AG04449 (cell line): ENCODE measurements at regions of chr10 and their contacts with region 1.

Region 1: DNA sequence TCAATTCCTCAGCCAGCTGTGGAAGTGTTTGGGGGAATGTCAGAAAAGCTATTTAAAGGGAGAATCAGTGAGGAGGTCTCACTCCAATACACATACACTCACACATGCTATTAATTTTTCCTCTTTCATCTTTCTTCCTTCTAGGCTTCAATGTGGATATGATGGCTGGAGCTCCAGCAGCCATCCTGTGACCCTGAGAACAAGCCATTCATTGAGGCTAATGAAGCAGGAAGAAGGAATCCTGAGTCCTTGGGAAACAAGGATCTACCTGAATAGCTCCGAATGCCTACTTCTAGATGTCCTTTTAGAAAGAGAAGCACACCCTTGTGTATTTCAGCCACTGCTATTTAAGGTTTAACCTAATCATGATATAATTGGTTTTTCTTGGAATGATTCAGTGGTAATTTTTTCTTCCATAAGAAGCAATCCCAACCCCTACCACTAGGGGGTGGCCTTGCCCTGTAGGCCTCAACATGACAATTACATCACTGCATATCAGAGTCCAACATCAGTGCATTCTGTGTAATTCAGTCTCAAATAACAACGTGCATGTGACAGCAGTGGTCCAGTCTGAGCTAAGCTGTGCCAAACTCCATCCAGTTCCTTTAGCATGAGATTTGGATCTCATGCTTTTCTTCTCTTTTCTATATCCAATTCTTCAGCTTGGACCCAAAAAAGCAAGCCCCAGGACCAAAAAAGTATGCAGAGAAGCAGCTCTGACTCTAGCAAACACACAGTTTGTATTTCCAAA is 85.3 kb upstream of the ANKRD1 start:
- DNase-seq: peak; percentile 41
- H3K4me3 ChIP-seq: no peak overlapping the region
- CTCF ChIP-seq: peak; percentile 77

Region 2: DNA sequence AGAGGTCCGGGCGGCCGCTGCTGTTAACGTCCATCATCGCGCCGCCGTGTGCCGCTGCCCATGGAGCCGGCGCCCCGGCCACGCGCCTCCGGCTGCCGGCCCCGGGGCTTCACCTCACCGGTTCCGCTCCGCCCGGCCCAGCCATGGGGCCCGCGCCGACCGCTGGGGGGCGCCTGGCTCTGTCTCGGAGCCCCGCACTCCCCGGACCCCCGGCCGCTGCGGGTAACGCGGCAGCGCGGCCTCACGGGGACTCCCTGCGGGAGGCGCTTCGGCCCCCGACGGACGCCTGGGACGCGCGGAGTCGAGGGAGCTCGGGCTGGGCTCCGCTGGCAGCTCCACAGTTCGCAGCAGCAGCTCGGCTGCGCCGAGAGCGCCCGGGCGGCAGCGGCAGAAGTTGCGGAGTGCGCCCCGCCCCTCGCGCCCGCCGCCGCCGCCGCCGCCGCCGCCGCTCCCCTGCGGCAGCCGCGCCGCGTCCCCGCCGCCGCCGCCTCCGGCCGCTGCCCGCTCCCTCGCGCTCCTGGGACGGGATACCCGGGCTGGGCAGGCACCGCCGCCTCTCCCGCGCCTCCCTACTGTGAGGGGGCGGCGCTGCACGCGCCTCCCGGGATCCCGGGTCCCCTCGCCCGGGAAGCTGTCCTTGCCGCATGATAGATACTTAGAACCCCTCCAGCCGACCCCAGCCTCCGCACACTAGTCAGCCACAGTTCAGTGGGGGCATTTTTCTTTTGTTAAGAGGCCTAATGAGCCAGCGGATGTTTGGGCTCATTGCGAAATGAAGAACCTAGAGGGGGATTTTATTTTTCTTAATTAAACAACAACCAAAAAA is 148.3 kb before region 1 on chr10 and contains the start of gene HTR7:
- CTCF ChIA-PET with region 1: no interaction called
- POLR2A ChIA-PET with region 1: no interaction called
- DNase-seq: no peak
- H3K4me3 ChIP-seq: peak within 1 kb of the TSS; percentile 63
- CTCF ChIP-seq: peak; percentile 57

Region 3: GRCh38 chr10:90920986-90921666 is 85.0 kb before region 1 on chr10 and contains the start of gene ANKRD1:
- CTCF ChIA-PET with region 1: interaction called, 10 read pairs
- POLR2A ChIA-PET with region 1: no interaction called
- DNase-seq: peak; percentile 82
- H3K4me3 ChIP-seq: no peak within 1 kb of the TSS
- CTCF ChIP-seq: no peak

Region 4: DNA sequence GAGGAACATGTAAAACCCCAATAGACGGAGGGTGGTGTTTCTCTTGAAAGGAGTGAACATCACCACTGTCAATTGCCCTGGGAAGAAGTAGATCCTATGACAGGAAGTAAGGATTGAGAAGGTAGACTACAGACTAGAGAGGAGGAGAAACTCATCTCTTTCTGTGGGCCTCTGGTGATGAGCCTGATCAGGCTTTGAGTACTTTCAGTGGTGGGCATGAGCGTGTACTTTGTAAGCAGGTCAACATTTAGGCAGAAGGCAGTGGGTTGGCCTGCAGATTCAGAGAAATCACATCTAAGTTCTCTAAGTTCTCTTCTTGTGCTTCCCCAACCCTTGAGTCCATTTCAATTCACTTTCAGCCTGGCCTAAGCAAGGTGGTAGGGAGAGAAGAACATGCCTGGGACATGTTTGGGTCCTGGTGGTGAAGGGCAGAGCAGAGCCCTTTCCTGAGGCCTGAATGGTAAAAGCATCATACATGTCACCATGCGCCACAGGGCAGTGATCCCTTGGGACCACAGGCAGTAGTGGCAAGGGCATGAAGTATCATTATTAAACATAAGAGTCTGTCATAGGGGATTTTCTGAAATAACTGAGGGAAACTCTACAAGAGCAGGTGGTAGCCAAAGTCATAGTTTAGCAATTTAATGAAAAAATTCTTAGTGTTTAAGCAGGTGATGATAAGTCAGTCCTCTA is 28.9 kb before region 1 on chr10:
- CTCF ChIA-PET with region 1: interaction called, 19 read pairs
- POLR2A ChIA-PET with region 1: no interaction called
- DNase-seq: no peak
- H3K4me3 ChIP-seq: no peak overlapping the region
- CTCF ChIP-seq: no peak

Region 5: GRCh38 chr10:91017198-91017597 is 11.0 kb after region 1 on chr10:
- CTCF ChIA-PET with region 1: interaction called, 76 read pairs
- POLR2A ChIA-PET with region 1: no interaction called
- DNase-seq: no peak
- H3K4me3 ChIP-seq: no peak overlapping the region
- CTCF ChIP-seq: no peak

Region 6: GRCh38 chr10:91088300-91089140 is 82.3 kb after region 1 on chr10:
- CTCF ChIA-PET with region 1: interaction called, 11 read pairs
- POLR2A ChIA-PET with region 1: no interaction called
- DNase-seq: no peak
- H3K4me3 ChIP-seq: no peak overlapping the region
- CTCF ChIP-seq: no peak